Ascending aorta (tissue), 2 donors: ENCODE measurements at regions of chr12 and their contacts with region 1.

Region 1: GRCh38 chr12:75977952-75978671 is 53.5 kb downstream of the PHLDA1 start:
- DNase-seq: peak; percentile 59 to 93
- H3K4me3 ChIP-seq: no peak overlapping the region
- H3K27ac ChIP-seq: peak overlapping the region; percentile 86 to 91
- H3K4me1 ChIP-seq: peaks cover 13 to 27% of the 10 kb centered on the region in 2 donors
- H3K27me3 ChIP-seq: no peaks in the 10 kb centered on the region
- CTCF ChIP-seq: no peak

Region 2: GRCh38 chr12:75814851-75815754 is 163.0 kb before region 1 on chr12:
- intact Hi-C with region 1: loop called (anchors 2 kb)
- DNase-seq: peak in 1 of 2 donors; percentile 71
- H3K4me3 ChIP-seq: no peak overlapping the region
- H3K27ac ChIP-seq: peak overlapping the region in 1 of 2 donors; percentile 61
- H3K4me1 ChIP-seq: peaks cover 0 to 2% of the 10 kb centered on the region in 2 donors
- H3K27me3 ChIP-seq: no peaks in the 10 kb centered on the region
- CTCF ChIP-seq: no peak

Region 3: GRCh38 chr12:75944097-75944904 is 33.8 kb before region 1 on chr12:
- intact Hi-C with region 1: loop called (anchors 2 kb)
- DNase-seq: no peak
- H3K4me3 ChIP-seq: no peak overlapping the region
- H3K27ac ChIP-seq: peak overlapping the region; percentile 77 to 81
- H3K4me1 ChIP-seq: peaks cover 3 to 10% of the 10 kb centered on the region in 2 donors
- H3K27me3 ChIP-seq: no peaks in the 10 kb centered on the region
- CTCF ChIP-seq: no peak

Region 4: DNA sequence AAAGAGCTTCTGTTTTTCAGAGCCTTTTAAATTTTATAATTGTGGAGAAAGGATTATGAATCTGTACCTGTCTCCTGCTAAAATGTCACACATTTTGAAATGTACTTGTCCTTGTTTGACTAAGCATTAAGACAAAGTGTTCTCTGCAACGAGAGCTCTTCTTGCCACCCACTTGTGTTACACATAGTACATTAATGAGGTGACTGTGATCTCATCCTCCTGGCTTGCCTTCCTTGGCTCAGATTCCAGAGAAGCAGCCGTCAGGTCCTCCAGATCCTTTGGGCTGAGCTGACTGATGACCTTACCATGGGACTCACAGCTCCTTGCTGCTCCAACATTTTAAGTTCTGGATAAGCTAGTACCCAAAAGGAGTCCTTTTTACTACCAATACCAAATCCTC is 288.7 kb after region 1 on chr12:
- intact Hi-C with region 1: no loop called
- DNase-seq: no peak
- H3K4me3 ChIP-seq: no peak overlapping the region
- H3K27ac ChIP-seq: no peak overlapping the region
- H3K4me1 ChIP-seq: no peaks in the 10 kb centered on the region
- H3K27me3 ChIP-seq: no peaks in the 10 kb centered on the region
- CTCF ChIP-seq: no peak